ENCODE measurements at regions of chr7 and their contacts with region 1.

Region 1: GRCh38 chr7:45026984-45027773 is 27.2 kb downstream of the CCM2 start:
- DNase-seq: peak; percentile 19 to 71
- ATAC-seq: peak; percentile 57 to 75 (median 69)
- H3K4me3 ChIP-seq: peak overlapping the region; percentile 88
- H3K4me3 Mint-ChIP-seq: peak overlapping the region; percentile 90
- H3K27ac ChIP-seq: peak overlapping the region; percentile 78
- H3K27ac Mint-ChIP-seq: peak overlapping the region; percentile 83 to 97
- H3K4me1 ChIP-seq: peaks cover 54% of the 10 kb centered on the region
- H3K4me1 Mint-ChIP-seq: peaks cover 64 to 69% of the 10 kb centered on the region in 2 donors
- H3K27me3 ChIP-seq: no peaks in the 10 kb centered on the region
- H3K27me3 Mint-ChIP-seq: no peaks in the 10 kb centered on the region
- CTCF ChIP-seq: no peak

Region 2: DNA sequence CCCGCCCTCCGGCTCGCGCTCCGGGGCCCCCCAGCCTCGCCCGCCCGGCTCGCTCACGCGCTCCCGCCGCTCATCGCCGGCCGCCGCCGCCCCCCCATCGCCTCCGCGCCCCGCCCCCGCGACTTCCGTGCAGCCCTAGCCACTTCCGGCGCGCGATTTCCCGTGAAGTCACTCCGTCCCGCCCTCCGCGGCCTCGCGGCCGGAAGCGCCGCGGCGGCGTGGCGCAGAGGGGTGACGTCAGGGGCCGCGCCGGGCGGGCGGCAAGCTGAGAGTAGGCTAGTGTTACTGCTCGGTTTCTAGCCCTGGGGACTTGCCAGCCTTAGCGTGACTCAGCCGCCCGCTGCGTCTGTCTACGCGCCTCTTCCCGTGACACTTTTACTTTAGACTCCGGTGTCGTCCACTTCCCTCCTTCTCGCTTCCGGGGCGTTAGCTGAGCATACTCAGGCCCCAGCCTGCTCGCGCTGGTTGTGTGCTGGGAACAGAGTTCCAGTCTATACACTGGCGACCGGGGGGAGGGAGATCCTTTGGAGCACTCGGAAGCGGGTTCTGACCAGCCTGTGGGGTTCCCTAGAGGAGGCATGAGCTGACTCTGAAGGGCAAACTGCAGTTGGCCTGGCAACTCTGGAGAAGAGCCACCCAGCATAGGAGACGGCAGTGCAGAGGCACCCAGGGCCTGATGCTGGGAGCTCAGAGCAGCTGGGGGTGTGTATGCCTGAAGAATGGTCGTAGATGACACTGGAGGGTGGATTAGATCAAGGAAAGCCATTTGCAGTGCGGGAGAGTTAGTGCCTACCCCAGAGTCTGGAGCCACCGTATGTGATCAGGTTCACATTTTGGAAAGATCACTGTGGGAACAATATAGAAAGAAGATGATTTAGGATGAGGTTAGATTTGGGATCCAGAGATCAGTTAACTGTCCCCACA is 141.5 kb before region 1 on chr7 and contains the start of gene PURB:
- intact Hi-C with region 1: no loop called
- DNase-seq: peak; percentile 98 to 99
- ATAC-seq: peak; percentile 83 to 94 (median 86)
- H3K4me3 ChIP-seq: peak within 1 kb of the TSS; percentile 75
- H3K4me3 Mint-ChIP-seq: peak within 1 kb of the TSS; percentile 99
- H3K27ac ChIP-seq: peak within 1 kb of the TSS; percentile 97
- H3K27ac Mint-ChIP-seq: peak within 1 kb of the TSS; percentile 100
- H3K4me1 ChIP-seq: peaks cover 35% of the 10 kb centered on the region
- H3K4me1 Mint-ChIP-seq: peaks cover 34 to 45% of the 10 kb centered on the region in 2 donors
- H3K27me3 ChIP-seq: no peaks in the 10 kb centered on the region
- H3K27me3 Mint-ChIP-seq: no peaks in the 10 kb centered on the region
- CTCF ChIP-seq: no peak
- total RNA-seq, gene PURB: 28.5 to 36.0 (median 33.7) TPM

Region 3: GRCh38 chr7:44973610-44974401 is 53.4 kb before region 1 on chr7:
- intact Hi-C with region 1: loop called (anchors 2 kb)
- DNase-seq: peak; percentile 51 to 76
- ATAC-seq: peak; percentile 28 to 45 (median 38)
- H3K4me3 ChIP-seq: no peak overlapping the region
- H3K4me3 Mint-ChIP-seq: peak overlapping the region; percentile 13
- H3K27ac ChIP-seq: no peak overlapping the region
- H3K27ac Mint-ChIP-seq: peak overlapping the region; percentile 50 to 99
- H3K4me1 ChIP-seq: peaks cover 57% of the 10 kb centered on the region
- H3K4me1 Mint-ChIP-seq: peaks cover 34 to 53% of the 10 kb centered on the region in 2 donors
- H3K27me3 ChIP-seq: no peaks in the 10 kb centered on the region
- H3K27me3 Mint-ChIP-seq: no peaks in the 10 kb centered on the region
- CTCF ChIP-seq: peak; percentile 58

Region 4: DNA sequence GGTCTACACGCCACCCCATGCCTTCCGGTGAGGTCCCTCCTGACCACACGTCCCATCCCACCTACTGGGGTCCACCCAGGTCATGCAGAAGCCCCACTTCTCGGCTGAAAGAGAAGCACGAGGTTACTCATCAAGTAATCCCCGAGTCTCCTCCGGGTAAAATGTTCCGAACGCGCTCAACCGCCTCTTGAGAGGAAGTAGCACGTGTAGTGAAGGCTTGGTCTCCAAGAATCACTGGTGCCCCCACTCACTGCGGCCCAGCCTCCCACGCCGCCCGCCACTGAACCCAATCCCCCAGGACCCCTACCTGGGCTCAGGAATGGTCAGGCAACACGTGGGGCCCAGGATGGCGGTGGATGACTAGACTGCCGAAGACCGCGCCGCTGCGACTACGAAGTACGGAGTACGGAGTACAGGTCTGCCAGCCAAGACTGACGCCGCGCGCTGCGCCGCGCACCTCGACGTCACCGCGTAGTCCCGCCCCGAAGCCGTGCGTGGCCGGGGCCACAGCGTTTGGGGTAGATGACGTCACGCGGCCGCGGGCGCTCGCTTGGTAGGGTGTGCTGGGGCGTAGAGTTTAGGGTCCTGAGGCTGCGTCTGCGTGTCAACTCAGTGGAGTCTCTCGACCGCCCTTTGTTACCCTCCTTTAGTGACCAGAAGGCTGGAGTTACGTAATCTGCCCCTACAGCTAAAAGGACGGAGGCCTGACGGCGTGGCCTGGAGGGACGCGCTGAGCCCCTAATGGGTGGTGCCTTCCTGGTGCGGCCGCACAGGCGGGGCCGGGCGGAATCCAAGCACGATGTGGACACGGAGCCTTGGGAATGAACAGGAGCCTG is 40.7 kb before region 1 on chr7:
- intact Hi-C with region 1: loop called (anchors 2 kb)
- DNase-seq: peak; percentile 96 to 99
- ATAC-seq: peak; percentile 91 to 98 (median 95)
- H3K4me3 ChIP-seq: peak overlapping the region; percentile 61
- H3K4me3 Mint-ChIP-seq: peak overlapping the region; percentile 96
- H3K27ac ChIP-seq: peak overlapping the region; percentile 84
- H3K27ac Mint-ChIP-seq: peak overlapping the region; percentile 99 to 100
- H3K4me1 ChIP-seq: peaks cover 40% of the 10 kb centered on the region
- H3K4me1 Mint-ChIP-seq: peaks cover 37 to 39% of the 10 kb centered on the region in 2 donors
- H3K27me3 ChIP-seq: no peaks in the 10 kb centered on the region
- H3K27me3 Mint-ChIP-seq: no peaks in the 10 kb centered on the region
- CTCF ChIP-seq: no peak

Region 5: GRCh38 chr7:44999245-45000095 is 27.7 kb before region 1 on chr7:
- intact Hi-C with region 1: loop called (anchors 2 kb)
- DNase-seq: peak; percentile 90 to 99
- ATAC-seq: peak; percentile 88 to 96 (median 89)
- H3K4me3 ChIP-seq: peak overlapping the region; percentile 54
- H3K4me3 Mint-ChIP-seq: peak overlapping the region; percentile 98
- H3K27ac ChIP-seq: peak overlapping the region; percentile 63
- H3K27ac Mint-ChIP-seq: peak overlapping the region; percentile 91 to 95
- H3K4me1 ChIP-seq: peaks cover 16% of the 10 kb centered on the region
- H3K4me1 Mint-ChIP-seq: peaks cover 27 to 38% of the 10 kb centered on the region in 2 donors
- H3K27me3 ChIP-seq: no peaks in the 10 kb centered on the region
- H3K27me3 Mint-ChIP-seq: no peaks in the 10 kb centered on the region
- CTCF ChIP-seq: no peak

Region 6: GRCh38 chr7:45048748-45049147 is 21.6 kb after region 1 on chr7:
- intact Hi-C with region 1: no loop called
- DNase-seq: no peak
- ATAC-seq: no peak
- H3K4me3 ChIP-seq: no peak overlapping the region
- H3K4me3 Mint-ChIP-seq: no peak overlapping the region
- H3K27ac ChIP-seq: no peak overlapping the region
- H3K27ac Mint-ChIP-seq: peak overlapping the region; percentile 78
- H3K4me1 ChIP-seq: peaks cover 3% of the 10 kb centered on the region
- H3K4me1 Mint-ChIP-seq: peaks cover 52 to 59% of the 10 kb centered on the region in 2 donors
- H3K27me3 ChIP-seq: no peaks in the 10 kb centered on the region
- H3K27me3 Mint-ChIP-seq: no peaks in the 10 kb centered on the region
- CTCF ChIP-seq: no peak

Region 7: DNA sequence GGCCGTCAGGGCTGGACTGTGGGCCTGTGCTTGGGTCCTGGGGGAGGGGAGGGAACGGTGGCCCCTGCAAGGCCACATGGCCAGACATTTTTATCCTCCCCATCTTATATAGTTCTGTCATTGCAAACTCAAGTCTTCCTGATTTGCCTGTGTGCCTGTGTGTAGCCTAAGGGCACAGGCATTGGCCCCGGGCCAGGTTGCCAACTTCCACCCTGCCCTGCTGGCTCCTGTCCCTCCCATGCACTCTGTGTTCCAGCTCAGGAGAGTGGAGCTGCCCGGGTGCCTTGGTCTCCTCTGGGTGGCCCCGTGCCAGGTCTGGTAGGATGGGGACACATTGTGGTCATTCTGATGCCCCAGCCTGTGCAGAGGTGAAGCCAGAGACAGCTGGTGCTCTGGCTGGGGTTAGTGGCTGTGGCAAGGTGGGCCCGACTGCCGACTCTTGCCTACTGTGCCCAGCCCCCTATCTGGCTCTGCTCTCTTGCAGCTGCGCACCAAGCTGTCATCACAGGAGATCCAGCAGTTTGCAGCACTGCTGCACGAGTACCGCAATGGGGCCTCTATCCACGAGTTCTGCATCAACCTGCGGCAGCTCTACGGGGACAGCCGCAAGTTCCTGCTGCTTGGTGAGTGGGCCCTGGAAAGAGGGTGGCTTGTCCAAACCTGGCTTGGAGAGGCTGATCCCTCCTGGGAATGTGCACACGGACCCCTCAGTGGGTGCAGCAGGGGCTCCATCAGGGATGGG is 46.8 kb after region 1 on chr7:
- intact Hi-C with region 1: loop called (anchors 10 kb)
- DNase-seq: no peak
- ATAC-seq: no peak
- H3K4me3 ChIP-seq: no peak overlapping the region
- H3K4me3 Mint-ChIP-seq: peak overlapping the region; percentile 79
- H3K27ac ChIP-seq: peak overlapping the region; percentile 27
- H3K27ac Mint-ChIP-seq: peak overlapping the region; percentile 88 to 92
- H3K4me1 ChIP-seq: peaks cover 55% of the 10 kb centered on the region
- H3K4me1 Mint-ChIP-seq: peaks cover 58 to 70% of the 10 kb centered on the region in 2 donors
- H3K27me3 ChIP-seq: no peaks in the 10 kb centered on the region
- H3K27me3 Mint-ChIP-seq: no peaks in the 10 kb centered on the region
- CTCF ChIP-seq: no peak